H1 (cell line): ENCODE measurements at regions of chr4 and their contacts with region 1.

Region 1: GRCh38 chr4:83284193-83285054 is at the start of gene COQ2:
- DNase-seq: peak; percentile 79 to 98
- H3K4me3 ChIP-seq: peak within 1 kb of the TSS; percentile 69 to 79 (median 74)
- H3K27ac ChIP-seq: peak within 1 kb of the TSS; percentile 95
- H3K4me1 ChIP-seq: no peaks in the 10 kb centered on the region; a peak in 1 of 7 replicates
- H3K27me3 ChIP-seq: peaks cover 0 to 8% (median 4%) of the 10 kb centered on the region in 4 experiments; a peak in 6 of 7 replicates
- CTCF ChIP-seq: peak in 2 of 3 experiments; percentile 16 to 21; a peak in 2 of 4 replicates
- EP300 ChIP-seq: peak in 1 of 2 experiments; percentile 74; a peak in 1 of 3 replicates
- POLR2A ChIP-seq: peak; percentile 91 to 94
- RAD21 ChIP-seq: peak in 1 of 2 experiments; percentile 8; a peak in 2 of 4 replicates
- total RNA-seq, gene COQ2: 19.8 and 21.5 TPM in 2 replicates

Region 2: GRCh38 chr4:83259586-83259985 is 24.8 kb before region 1 on chr4:
- CTCF ChIA-PET with region 1: interaction called, 20 read pairs
- POLR2A ChIA-PET with region 1: interaction called, 5 read pairs
- DNase-seq: no peak
- H3K4me3 ChIP-seq: no peak overlapping the region
- H3K27ac ChIP-seq: no peak overlapping the region
- H3K4me1 ChIP-seq: no peaks in the 10 kb centered on the region
- H3K27me3 ChIP-seq: peaks cover 0 to 2% (median 0%) of the 10 kb centered on the region in 4 experiments; a peak in 1 of 7 replicates
- CTCF ChIP-seq: no peak
- EP300 ChIP-seq: no peak
- POLR2A ChIP-seq: no peak
- RAD21 ChIP-seq: no peak

Region 3: DNA sequence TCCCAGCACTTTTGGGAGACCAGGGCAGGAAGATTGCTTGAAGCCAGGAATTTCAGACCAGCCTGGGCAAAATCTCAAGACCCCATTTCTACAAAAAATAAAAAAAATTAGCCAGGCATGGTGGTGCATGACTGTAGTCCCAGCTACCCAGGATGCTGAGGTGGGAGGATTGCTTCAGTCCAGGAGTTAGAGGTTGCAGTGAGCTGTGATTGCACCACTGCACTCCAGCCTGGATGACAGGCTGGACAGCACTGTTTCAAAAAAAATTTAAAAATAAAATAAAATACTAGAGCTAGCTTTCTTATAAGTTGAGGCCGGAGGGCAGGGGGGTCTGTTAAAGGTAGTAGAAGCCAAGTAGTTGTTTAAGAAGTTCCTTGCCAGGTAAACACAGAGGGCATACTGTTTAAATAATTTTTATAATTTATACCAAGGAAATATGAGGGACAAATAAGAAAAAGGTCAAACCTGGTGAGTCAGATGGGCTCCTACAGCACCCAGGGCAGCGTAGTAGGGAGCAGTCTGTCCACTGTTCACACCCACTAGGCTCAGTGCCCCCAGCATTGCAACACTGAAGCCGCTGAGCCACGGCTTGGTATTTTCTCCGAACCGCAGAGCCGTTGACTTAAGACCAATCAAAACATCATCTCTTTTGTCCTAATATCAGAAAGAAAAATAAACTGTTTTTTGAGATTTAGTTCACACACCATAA is 17.1 kb before region 1 on chr4:
- CTCF ChIA-PET with region 1: interaction called, 20 read pairs
- POLR2A ChIA-PET with region 1: interaction called, 3 read pairs
- DNase-seq: no peak
- H3K4me3 ChIP-seq: no peak overlapping the region
- H3K27ac ChIP-seq: no peak overlapping the region
- H3K4me1 ChIP-seq: no peaks in the 10 kb centered on the region
- H3K27me3 ChIP-seq: no peaks in the 10 kb centered on the region
- CTCF ChIP-seq: no peak
- EP300 ChIP-seq: no peak
- POLR2A ChIP-seq: no peak
- RAD21 ChIP-seq: no peak

Region 4: DNA sequence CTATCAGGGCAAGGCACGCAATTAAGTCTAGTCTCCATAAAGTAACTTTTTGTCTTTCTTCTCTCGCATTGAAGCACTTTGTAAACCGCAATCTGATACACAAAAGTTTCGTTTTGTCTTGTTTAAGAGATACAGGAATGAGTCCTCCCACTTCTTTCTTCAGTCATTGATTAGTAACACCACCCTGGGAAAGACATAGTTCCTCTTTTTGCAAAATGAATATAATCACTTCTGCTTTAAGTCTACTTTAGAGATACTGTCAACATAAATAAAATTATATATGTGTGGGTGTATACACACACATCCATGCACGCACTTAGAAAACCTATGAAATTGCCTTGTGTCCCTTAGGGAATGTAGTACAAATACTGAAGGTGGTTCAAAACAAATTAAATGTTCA is 11.5 kb before region 1 on chr4:
- CTCF ChIA-PET with region 1: interaction called, 20 read pairs
- POLR2A ChIA-PET with region 1: interaction called, 3 read pairs
- DNase-seq: no peak
- H3K4me3 ChIP-seq: no peak overlapping the region
- H3K27ac ChIP-seq: no peak overlapping the region
- H3K4me1 ChIP-seq: no peaks in the 10 kb centered on the region
- H3K27me3 ChIP-seq: no peaks in the 10 kb centered on the region
- CTCF ChIP-seq: no peak
- EP300 ChIP-seq: no peak
- POLR2A ChIP-seq: no peak
- RAD21 ChIP-seq: no peak